ENCODE measurements at regions of chr12 and their contacts with region 1.

Region 1: DNA sequence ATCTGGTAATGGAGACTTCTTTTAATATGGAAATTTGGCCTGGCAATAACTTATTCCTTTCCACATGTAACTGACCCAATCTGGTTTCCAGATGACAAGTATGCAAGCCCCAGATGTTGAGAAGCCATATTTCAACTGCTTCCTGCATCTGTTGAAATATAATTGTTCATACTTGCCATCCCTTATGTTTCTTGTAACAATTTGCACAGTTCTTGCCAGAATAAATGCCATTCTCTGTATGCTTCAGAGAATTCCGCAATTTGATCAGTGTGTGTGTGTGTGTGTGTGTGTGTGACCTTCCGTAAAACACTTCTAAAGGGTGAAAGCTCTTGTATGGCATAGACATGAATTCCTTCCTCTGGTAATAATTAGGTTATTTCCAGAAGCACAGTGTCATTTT is 1.8 kb upstream of the CLEC2A start:
- DNase-seq: no peak
- ATAC-seq: no peak
- H3K4me3 ChIP-seq: no peak overlapping the region
- H3K27ac ChIP-seq: no peak overlapping the region
- H3K4me1 ChIP-seq: no peaks in the 10 kb centered on the region
- H3K27me3 ChIP-seq: no peaks in the 10 kb centered on the region
- CTCF ChIP-seq: no peak
- EP300 ChIP-seq: no peak
- POLR2A ChIP-seq: no peak
- RAD21 ChIP-seq: no peak

Region 2: DNA sequence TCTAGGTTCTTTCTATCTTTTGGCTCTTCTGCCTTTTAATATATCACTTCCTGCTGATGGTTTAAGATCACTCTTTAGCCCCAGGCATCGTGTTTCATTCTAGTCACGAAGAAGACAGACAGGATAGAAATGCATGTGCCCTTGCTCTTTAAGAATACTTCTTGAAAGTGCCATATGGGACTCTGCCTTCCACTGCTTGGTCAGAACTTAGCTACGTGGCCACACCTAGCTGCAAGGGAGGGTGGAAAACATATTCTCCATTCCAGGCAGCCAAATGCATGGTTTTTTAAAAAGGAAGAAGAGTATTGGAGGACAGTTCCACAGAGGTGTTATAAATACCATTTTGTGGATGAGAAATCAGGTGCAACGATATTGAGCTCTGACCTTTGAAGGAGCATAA is 469.6 kb before region 1 on chr12:
- CTCF ChIA-PET with region 1: no interaction called
- POLR2A ChIA-PET with region 1: no interaction called
- in situ Hi-C with region 1: no loop called
- intact Hi-C with region 1: no loop called
- DNase-seq: no peak
- ATAC-seq: no peak
- H3K4me3 ChIP-seq: no peak overlapping the region
- H3K27ac ChIP-seq: no peak overlapping the region
- H3K4me1 ChIP-seq: no peaks in the 10 kb centered on the region; a peak in 1 of 5 replicates
- H3K27me3 ChIP-seq: no peaks in the 10 kb centered on the region
- CTCF ChIP-seq: no peak
- EP300 ChIP-seq: no peak
- POLR2A ChIP-seq: no peak
- RAD21 ChIP-seq: no peak

Region 3: DNA sequence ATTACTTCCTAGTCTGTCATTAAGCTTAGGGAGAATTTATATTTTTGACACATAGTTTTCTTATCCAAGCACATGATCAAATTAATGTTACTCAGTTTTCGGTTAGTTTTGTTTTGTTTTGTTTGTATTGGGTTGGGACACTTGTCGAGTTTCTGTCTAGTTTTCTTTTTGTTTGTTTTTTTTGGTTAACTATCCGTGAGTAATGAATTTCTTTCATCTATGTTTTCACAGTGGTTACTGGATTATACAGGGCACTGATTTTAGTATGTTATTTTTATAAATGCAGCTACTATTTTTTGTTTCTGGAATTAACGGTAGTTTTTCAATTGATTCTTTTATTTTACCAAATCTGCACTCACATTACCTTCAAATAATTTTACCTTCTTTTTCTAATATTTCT is 104.0 kb before region 1 on chr12:
- CTCF ChIA-PET with region 1: no interaction called
- POLR2A ChIA-PET with region 1: no interaction called
- in situ Hi-C with region 1: loop called (anchors 10 kb)
- intact Hi-C with region 1: no loop called
- DNase-seq: no peak
- ATAC-seq: no peak
- H3K4me3 ChIP-seq: no peak overlapping the region
- H3K27ac ChIP-seq: no peak overlapping the region
- H3K4me1 ChIP-seq: no peaks in the 10 kb centered on the region
- H3K27me3 ChIP-seq: no peaks in the 10 kb centered on the region
- CTCF ChIP-seq: no peak
- EP300 ChIP-seq: no peak
- POLR2A ChIP-seq: no peak
- RAD21 ChIP-seq: no peak

Region 4: DNA sequence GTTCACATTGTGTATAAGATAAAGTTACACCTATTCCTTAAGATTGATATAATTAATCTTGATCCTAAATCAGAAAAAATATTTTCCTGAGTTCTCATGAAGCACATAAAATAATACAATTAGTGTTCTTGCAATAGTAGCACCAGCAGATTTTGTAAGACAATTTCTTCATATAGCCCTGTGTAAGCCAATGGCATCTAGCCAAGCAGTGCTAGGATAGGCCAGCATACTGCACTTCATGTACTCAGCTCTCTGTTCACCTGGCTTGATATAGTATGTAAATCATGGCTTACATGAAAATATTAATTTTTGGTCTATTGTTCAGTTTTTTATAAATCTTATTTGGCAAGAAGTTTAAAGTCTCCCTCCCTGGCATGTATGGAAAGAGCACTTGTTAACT is 50.8 kb before region 1 on chr12:
- CTCF ChIA-PET with region 1: no interaction called
- POLR2A ChIA-PET with region 1: no interaction called
- in situ Hi-C with region 1: no loop called
- intact Hi-C with region 1: no loop called
- DNase-seq: no peak
- ATAC-seq: no peak
- H3K4me3 ChIP-seq: no peak overlapping the region
- H3K27ac ChIP-seq: no peak overlapping the region
- H3K4me1 ChIP-seq: no peaks in the 10 kb centered on the region
- H3K27me3 ChIP-seq: no peaks in the 10 kb centered on the region
- CTCF ChIP-seq: no peak
- EP300 ChIP-seq: no peak
- POLR2A ChIP-seq: no peak
- RAD21 ChIP-seq: no peak

Region 5: GRCh38 chr12:9992296-9992695 is 58.3 kb after region 1 on chr12:
- CTCF ChIA-PET with region 1: no interaction called
- POLR2A ChIA-PET with region 1: no interaction called
- in situ Hi-C with region 1: no loop called
- intact Hi-C with region 1: loop called (anchors 10 kb)
- DNase-seq: no peak
- ATAC-seq: no peak
- H3K4me3 ChIP-seq: no peak overlapping the region
- H3K27ac ChIP-seq: no peak overlapping the region
- H3K4me1 ChIP-seq: no peaks in the 10 kb centered on the region
- H3K27me3 ChIP-seq: no peaks in the 10 kb centered on the region
- CTCF ChIP-seq: no peak
- EP300 ChIP-seq: no peak
- POLR2A ChIP-seq: no peak
- RAD21 ChIP-seq: no peak

Region 6: GRCh38 chr12:10235761-10236631 is 302.0 kb after region 1 on chr12:
- CTCF ChIA-PET with region 1: no interaction called
- POLR2A ChIA-PET with region 1: no interaction called
- in situ Hi-C with region 1: no loop called
- intact Hi-C with region 1: no loop called
- DNase-seq: peak; percentile 24 to 45 (median 42)
- ATAC-seq: peak; percentile 47; the same call in 1 of the 3 replicates
- H3K4me3 ChIP-seq: no peak overlapping the region
- H3K27ac ChIP-seq: no peak overlapping the region
- H3K4me1 ChIP-seq: no peaks in the 10 kb centered on the region
- H3K27me3 ChIP-seq: no peaks in the 10 kb centered on the region
- CTCF ChIP-seq: peak; percentile 43 to 69 (median 60)
- EP300 ChIP-seq: no peak
- POLR2A ChIP-seq: no peak
- RAD21 ChIP-seq: peak; percentile 73 to 84

Measured in K562 (cell line).